CD8-positive, alpha-beta T cell (primary cell): ENCODE measurements at regions of chr17 and their contacts with region 1.

Region 1: GRCh38 chr17:43170766-43171585 is at the start of gene NBR1:
- DNase-seq: peak; percentile 88 to 99 (median 95)
- ATAC-seq: peak; percentile 79
- H3K4me3 ChIP-seq: peak within 1 kb of the TSS; percentile 84 to 85
- H3K4me3 Mint-ChIP-seq: no peak within 1 kb of the TSS
- H3K27ac ChIP-seq: peak within 1 kb of the TSS; percentile 97 to 98
- H3K27ac Mint-ChIP-seq: no peak within 1 kb of the TSS
- H3K4me1 ChIP-seq: peaks cover 35% of the 10 kb centered on the region
- H3K4me1 Mint-ChIP-seq: peaks cover 33% of the 10 kb centered on the region
- H3K27me3 ChIP-seq: no peaks in the 10 kb centered on the region
- H3K27me3 Mint-ChIP-seq: no peaks in the 10 kb centered on the region
- CTCF ChIP-seq: no peak
- total RNA-seq, gene NBR1: 19.1 to 19.4 TPM

Region 2: GRCh38 chr17:42153919-42154742 is 1016.8 kb before region 1 on chr17:
- CTCF ChIA-PET with region 1: no interaction called
- POLR2A ChIA-PET with region 1: no interaction called
- intact Hi-C with region 1: loop called in 1 of 2 experiments (anchors 5 kb)
- DNase-seq: peak in 2 of 9 experiments; percentile 20 to 40
- ATAC-seq: no peak
- H3K4me3 ChIP-seq: peak overlapping the region; percentile 94 to 95
- H3K4me3 Mint-ChIP-seq: peak overlapping the region; percentile 98
- H3K27ac ChIP-seq: peak overlapping the region; percentile 78 to 87
- H3K27ac Mint-ChIP-seq: peak overlapping the region; percentile 95
- H3K4me1 ChIP-seq: peaks cover 24% of the 10 kb centered on the region
- H3K4me1 Mint-ChIP-seq: peaks cover 39% of the 10 kb centered on the region
- H3K27me3 ChIP-seq: no peaks in the 10 kb centered on the region
- H3K27me3 Mint-ChIP-seq: no peaks in the 10 kb centered on the region
- CTCF ChIP-seq: no peak

Region 3: GRCh38 chr17:42832974-42833766 is 337.8 kb before region 1 on chr17 and contains the start of gene PSME3:
- CTCF ChIA-PET with region 1: no interaction called
- POLR2A ChIA-PET with region 1: no interaction called
- intact Hi-C with region 1: loop called in 1 of 2 experiments (anchors 2 kb)
- DNase-seq: peak; percentile 75 to 95 (median 88)
- ATAC-seq: peak; percentile 87
- H3K4me3 ChIP-seq: peak within 1 kb of the TSS; percentile 93 to 100
- H3K4me3 Mint-ChIP-seq: peak within 1 kb of the TSS; percentile 97
- H3K27ac ChIP-seq: peak within 1 kb of the TSS; percentile 95
- H3K27ac Mint-ChIP-seq: peak within 1 kb of the TSS; percentile 99
- H3K4me1 ChIP-seq: peaks cover 17% of the 10 kb centered on the region
- H3K4me1 Mint-ChIP-seq: peaks cover 31% of the 10 kb centered on the region
- H3K27me3 ChIP-seq: no peaks in the 10 kb centered on the region
- H3K27me3 Mint-ChIP-seq: no peaks in the 10 kb centered on the region
- CTCF ChIP-seq: no peak
- total RNA-seq, gene PSME3: 74.1 to 74.2 TPM

Region 4: GRCh38 chr17:43125133-43125966 is 45.6 kb before region 1 on chr17 and contains the start of gene BRCA1:
- CTCF ChIA-PET with region 1: interaction called, 3 read pairs
- POLR2A ChIA-PET with region 1: interaction called, 4 read pairs
- intact Hi-C with region 1: loop called (anchors 1 kb)
- DNase-seq: peak; percentile 86 to 99 (median 94)
- ATAC-seq: peak; percentile 99
- H3K4me3 ChIP-seq: peak within 1 kb of the TSS; percentile 63 to 74
- H3K4me3 Mint-ChIP-seq: peak within 1 kb of the TSS; percentile 94
- H3K27ac ChIP-seq: peak within 1 kb of the TSS; percentile 57 to 84
- H3K27ac Mint-ChIP-seq: peak within 1 kb of the TSS; percentile 92
- H3K4me1 ChIP-seq: peaks cover 15% of the 10 kb centered on the region
- H3K4me1 Mint-ChIP-seq: peaks cover 30% of the 10 kb centered on the region
- H3K27me3 ChIP-seq: no peaks in the 10 kb centered on the region
- H3K27me3 Mint-ChIP-seq: no peaks in the 10 kb centered on the region
- CTCF ChIP-seq: no peak
- total RNA-seq, gene BRCA1: 1.1 to 1.3 TPM

Region 5: DNA sequence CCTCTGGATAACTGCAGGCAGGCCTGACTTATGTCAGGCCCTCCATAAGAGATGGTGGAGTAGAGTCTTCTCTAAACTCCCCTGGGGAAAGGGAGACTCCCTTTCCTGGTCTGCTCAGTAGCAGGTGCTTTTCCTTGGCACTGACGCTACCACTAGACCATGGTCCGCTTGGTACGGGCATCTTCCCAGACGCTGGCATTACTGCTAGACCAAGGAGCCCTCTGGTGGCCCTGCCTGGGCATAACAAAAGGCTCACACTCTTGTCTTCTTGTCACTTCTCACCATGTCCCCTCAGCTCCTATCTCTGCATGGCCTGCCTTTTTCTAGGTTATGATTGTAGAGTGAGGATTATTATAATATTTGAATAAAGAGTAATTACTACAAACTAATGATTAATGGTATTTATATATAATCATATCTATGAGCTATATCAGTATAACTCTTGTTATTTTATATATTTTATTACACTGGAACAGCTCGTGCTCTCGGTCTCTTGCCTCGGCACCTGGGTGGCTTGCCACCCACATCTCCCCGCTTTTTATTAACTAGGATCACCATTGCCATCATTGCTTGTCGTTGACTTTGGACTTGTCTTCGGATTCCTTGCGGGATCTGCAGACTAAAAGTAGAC is 168.0 kb after region 1 on chr17:
- CTCF ChIA-PET with region 1: interaction called, 5 read pairs
- POLR2A ChIA-PET with region 1: interaction called, 4 read pairs
- intact Hi-C with region 1: loop called in 1 of 2 experiments (anchors 5 kb)
- DNase-seq: peak; percentile 32 to 78 (median 62)
- ATAC-seq: peak; percentile 36
- H3K4me3 ChIP-seq: no peak overlapping the region
- H3K4me3 Mint-ChIP-seq: no peak overlapping the region
- H3K27ac ChIP-seq: no peak overlapping the region
- H3K27ac Mint-ChIP-seq: no peak overlapping the region
- H3K4me1 ChIP-seq: peaks cover 6% of the 10 kb centered on the region
- H3K4me1 Mint-ChIP-seq: peaks cover 8% of the 10 kb centered on the region
- H3K27me3 ChIP-seq: no peaks in the 10 kb centered on the region
- H3K27me3 Mint-ChIP-seq: no peaks in the 10 kb centered on the region
- CTCF ChIP-seq: peak; percentile 69

Region 6: GRCh38 chr17:43388359-43389045 is 217.5 kb after region 1 on chr17:
- CTCF ChIA-PET with region 1: no interaction called
- POLR2A ChIA-PET with region 1: interaction called, 3 read pairs
- intact Hi-C with region 1: loop called in 1 of 2 experiments (anchors 2 kb)
- DNase-seq: peak; percentile 88 to 96 (median 90)
- ATAC-seq: peak; percentile 71
- H3K4me3 ChIP-seq: peak overlapping the region; percentile 74 to 94
- H3K4me3 Mint-ChIP-seq: peak overlapping the region; percentile 89
- H3K27ac ChIP-seq: peak overlapping the region; percentile 94 to 96
- H3K27ac Mint-ChIP-seq: peak overlapping the region; percentile 97
- H3K4me1 ChIP-seq: peaks cover 14% of the 10 kb centered on the region
- H3K4me1 Mint-ChIP-seq: peaks cover 37% of the 10 kb centered on the region
- H3K27me3 ChIP-seq: no peaks in the 10 kb centered on the region
- H3K27me3 Mint-ChIP-seq: no peaks in the 10 kb centered on the region
- CTCF ChIP-seq: no peak

Region 7: GRCh38 chr17:43861024-43861621 is 690.1 kb after region 1 on chr17:
- CTCF ChIA-PET with region 1: no interaction called
- POLR2A ChIA-PET with region 1: no interaction called
- intact Hi-C with region 1: no loop called
- DNase-seq: no peak
- ATAC-seq: no peak
- H3K4me3 ChIP-seq: no peak overlapping the region
- H3K4me3 Mint-ChIP-seq: no peak overlapping the region
- H3K27ac ChIP-seq: no peak overlapping the region
- H3K27ac Mint-ChIP-seq: no peak overlapping the region
- H3K4me1 ChIP-seq: no peaks in the 10 kb centered on the region
- H3K4me1 Mint-ChIP-seq: no peaks in the 10 kb centered on the region
- H3K27me3 ChIP-seq: no peaks in the 10 kb centered on the region
- H3K27me3 Mint-ChIP-seq: peaks cover 8% of the 10 kb centered on the region
- CTCF ChIP-seq: no peak